ENCODE measurements at regions of chr15 and their contacts with region 1.

Region 1: DNA sequence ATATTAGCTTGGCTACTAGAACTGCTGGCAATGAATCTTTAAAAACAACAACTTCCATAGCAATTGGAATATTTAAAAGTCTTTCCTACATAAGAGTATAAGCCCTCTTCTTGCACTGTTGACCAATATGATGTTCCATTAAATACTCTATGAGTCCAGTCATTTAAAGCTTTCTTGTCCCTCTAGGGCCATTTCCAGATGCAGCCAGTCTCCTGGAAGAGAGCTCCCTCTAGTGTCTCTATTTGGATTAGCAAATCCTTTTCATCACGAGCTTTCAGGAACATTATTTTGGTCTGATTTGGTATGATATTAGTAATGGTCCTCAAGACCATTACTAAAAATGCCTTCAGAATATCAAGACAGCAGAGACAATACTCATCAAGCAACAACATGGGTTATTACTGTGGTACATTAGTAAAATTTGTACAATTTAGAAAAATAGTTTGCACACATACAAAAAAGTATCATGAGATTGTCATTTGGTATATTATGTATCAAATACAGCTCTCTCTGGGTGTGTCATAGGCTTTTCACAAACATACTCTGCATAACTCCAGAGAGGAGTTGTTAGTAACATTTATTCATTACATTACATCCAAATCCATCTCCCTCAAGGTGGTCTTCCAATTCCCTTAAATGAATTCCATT is 101.3 kb downstream of the DPH6 start:
- DNase-seq: peak; percentile 62
- H3K4me3 Mint-ChIP-seq: no peak overlapping the region
- H3K27ac Mint-ChIP-seq: no peak overlapping the region
- H3K4me1 Mint-ChIP-seq: no peaks in the 10 kb centered on the region
- H3K27me3 Mint-ChIP-seq: no peaks in the 10 kb centered on the region
- CTCF ChIP-seq: peak; percentile 76

Region 2: GRCh38 chr15:34621675-34622074 is 823.0 kb before region 1 on chr15:
- CTCF ChIA-PET with region 1: no interaction called
- POLR2A ChIA-PET with region 1: no interaction called
- intact Hi-C with region 1: loop called (anchors 10 kb)
- DNase-seq: peak; percentile 51
- H3K4me3 Mint-ChIP-seq: no peak overlapping the region
- H3K27ac Mint-ChIP-seq: no peak overlapping the region
- H3K4me1 Mint-ChIP-seq: peaks cover 3% of the 10 kb centered on the region
- H3K27me3 Mint-ChIP-seq: peaks cover 15% of the 10 kb centered on the region
- CTCF ChIP-seq: peak; percentile 52

Region 3: DNA sequence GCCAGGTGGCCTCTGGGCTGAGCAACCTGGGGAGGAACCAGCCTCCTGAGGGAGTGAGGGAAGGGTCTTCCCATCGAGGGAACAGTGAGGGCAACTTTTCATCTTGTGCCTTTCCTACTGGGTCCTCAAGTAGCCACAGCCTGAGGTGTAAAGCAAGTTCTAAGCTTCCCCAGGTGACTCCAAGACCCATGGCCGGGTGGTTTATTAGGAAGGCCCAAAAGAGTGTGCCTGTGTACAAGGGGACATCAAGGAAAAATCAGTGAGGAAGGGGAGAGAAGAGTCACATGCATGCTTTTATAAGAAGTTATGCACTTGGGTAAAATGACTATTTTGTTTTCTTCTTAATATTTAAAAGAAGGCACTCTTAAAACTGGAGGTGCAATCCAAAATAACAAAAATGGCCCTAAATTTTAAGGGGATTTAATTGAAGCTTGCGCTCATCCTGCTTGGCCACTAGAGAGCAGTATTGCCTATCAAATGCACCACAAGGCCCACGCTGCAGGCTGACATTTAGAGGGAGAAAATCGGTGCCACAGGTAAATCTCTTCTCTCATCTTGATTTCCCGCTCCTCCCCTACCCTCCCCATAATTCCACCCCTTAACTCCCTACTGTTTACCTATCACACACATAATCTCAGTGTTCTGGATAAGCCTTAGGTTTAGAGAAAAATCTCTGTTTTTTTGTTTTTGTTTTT is 366.3 kb before region 1 on chr15:
- CTCF ChIA-PET with region 1: interaction called, 108 read pairs
- POLR2A ChIA-PET with region 1: no interaction called
- intact Hi-C with region 1: loop called (anchors 1 kb)
- DNase-seq: peak; percentile 52
- H3K4me3 Mint-ChIP-seq: no peak overlapping the region
- H3K27ac Mint-ChIP-seq: no peak overlapping the region
- H3K4me1 Mint-ChIP-seq: no peaks in the 10 kb centered on the region
- H3K27me3 Mint-ChIP-seq: no peaks in the 10 kb centered on the region
- CTCF ChIP-seq: peak; percentile 81

Region 4: DNA sequence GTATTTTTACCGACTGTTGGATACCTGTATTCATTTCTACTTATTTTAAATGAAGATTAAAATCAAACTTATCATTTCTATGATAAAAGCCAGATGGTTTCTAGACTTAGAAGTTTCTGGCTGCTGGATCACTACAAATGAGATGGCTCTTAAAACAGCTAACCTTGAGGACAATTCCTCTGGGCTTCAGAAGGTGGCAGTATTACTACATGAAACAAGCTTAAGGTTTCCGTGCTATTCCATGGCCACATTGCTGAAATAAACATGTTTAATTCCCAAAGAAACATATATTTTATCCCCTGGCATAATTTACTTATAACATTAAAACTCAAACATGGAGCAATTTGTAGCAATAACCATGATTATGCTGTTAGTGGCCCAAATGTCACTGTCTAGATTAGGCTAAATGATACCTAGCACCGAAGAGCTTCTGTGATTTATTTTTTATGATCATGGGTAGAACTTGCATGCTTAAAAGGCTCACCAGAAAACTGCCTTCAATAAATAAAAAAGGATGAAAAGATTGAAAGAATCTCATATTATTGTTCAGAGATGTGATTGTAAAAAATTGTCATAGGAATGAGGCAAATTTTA is 155.6 kb before region 1 on chr15:
- CTCF ChIA-PET with region 1: interaction called, 240 read pairs
- POLR2A ChIA-PET with region 1: interaction called, 10 read pairs
- intact Hi-C with region 1: loop called (anchors 1 kb)
- DNase-seq: peak; percentile 61
- H3K4me3 Mint-ChIP-seq: no peak overlapping the region
- H3K27ac Mint-ChIP-seq: no peak overlapping the region
- H3K4me1 Mint-ChIP-seq: peaks cover 11% of the 10 kb centered on the region
- H3K27me3 Mint-ChIP-seq: no peaks in the 10 kb centered on the region
- CTCF ChIP-seq: peak; percentile 64

Region 5: GRCh38 chr15:35306361-35306981 is 138.2 kb before region 1 on chr15:
- CTCF ChIA-PET with region 1: interaction called, 14 read pairs
- POLR2A ChIA-PET with region 1: interaction called, 3 read pairs
- intact Hi-C with region 1: no loop called
- DNase-seq: peak; percentile 53
- H3K4me3 Mint-ChIP-seq: peak overlapping the region; percentile 54
- H3K27ac Mint-ChIP-seq: peak overlapping the region; percentile 96
- H3K4me1 Mint-ChIP-seq: peaks cover 32% of the 10 kb centered on the region
- H3K27me3 Mint-ChIP-seq: no peaks in the 10 kb centered on the region
- CTCF ChIP-seq: no peak

Region 6: DNA sequence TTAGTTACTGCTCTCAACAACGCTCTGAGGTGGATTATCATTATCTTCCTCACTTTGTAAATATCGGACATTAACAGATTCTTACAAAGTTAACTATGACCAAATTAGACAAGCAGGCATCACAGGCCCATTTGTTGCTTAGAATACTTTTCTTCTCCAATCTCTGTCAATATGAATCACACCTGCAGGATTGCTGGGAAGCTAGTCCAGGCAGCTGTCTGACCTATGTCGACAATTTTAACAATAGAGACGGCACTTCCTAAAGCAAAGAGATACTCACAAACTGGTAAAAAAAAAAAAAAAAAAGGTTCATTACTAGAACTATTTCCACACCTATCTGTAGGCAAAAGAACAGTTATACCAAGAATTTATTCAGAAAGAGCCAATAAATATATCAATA is 15.9 kb after region 1 on chr15:
- CTCF ChIA-PET with region 1: interaction called, 16 read pairs
- POLR2A ChIA-PET with region 1: interaction called, 8 read pairs
- intact Hi-C with region 1: no loop called
- DNase-seq: no peak
- H3K4me3 Mint-ChIP-seq: no peak overlapping the region
- H3K27ac Mint-ChIP-seq: no peak overlapping the region
- H3K4me1 Mint-ChIP-seq: peaks cover 10% of the 10 kb centered on the region
- H3K27me3 Mint-ChIP-seq: no peaks in the 10 kb centered on the region
- CTCF ChIP-seq: no peak

Measured in MCF 10A (cell line).